PC-3 (cell line): ENCODE measurements at regions of chr10 and their contacts with region 1.

Region 1: GRCh38 chr10:5889624-5890451 is at the starts of genes ANKRD16 and FBH1:
- DNase-seq: peak; percentile 93
- ATAC-seq: peak; percentile 86
- H3K4me3 ChIP-seq: peak within 1 kb of the TSS; percentile 77
- H3K27ac ChIP-seq: no peak within 1 kb of the TSS
- H3K4me1 ChIP-seq: peaks cover 4% of the 10 kb centered on the region
- H3K27me3 ChIP-seq: no peaks in the 10 kb centered on the region
- CTCF ChIP-seq: no peak
- total RNA-seq, gene ANKRD16: 4.9 and 7.2 TPM in 2 replicates
- total RNA-seq, gene FBH1: 22.0 and 33.2 TPM in 2 replicates

Region 2: GRCh38 chr10:5684318-5684970 is 205.4 kb before region 1 on chr10 and contains the start of gene TASOR2:
- CTCF ChIA-PET with region 1: no interaction called
- POLR2A ChIA-PET with region 1: no interaction called
- intact Hi-C with region 1: loop called (anchors 10 kb)
- DNase-seq: peak; percentile 88
- ATAC-seq: peak; percentile 84
- H3K4me3 ChIP-seq: peak within 1 kb of the TSS; percentile 84
- H3K27ac ChIP-seq: peak within 1 kb of the TSS; percentile 73
- H3K4me1 ChIP-seq: peaks cover 12% of the 10 kb centered on the region; the same call in 1 of the 2 replicates
- H3K27me3 ChIP-seq: no peaks in the 10 kb centered on the region
- CTCF ChIP-seq: no peak
- total RNA-seq, gene TASOR2: 47.3 and 52.9 TPM in 2 replicates

Region 3: DNA sequence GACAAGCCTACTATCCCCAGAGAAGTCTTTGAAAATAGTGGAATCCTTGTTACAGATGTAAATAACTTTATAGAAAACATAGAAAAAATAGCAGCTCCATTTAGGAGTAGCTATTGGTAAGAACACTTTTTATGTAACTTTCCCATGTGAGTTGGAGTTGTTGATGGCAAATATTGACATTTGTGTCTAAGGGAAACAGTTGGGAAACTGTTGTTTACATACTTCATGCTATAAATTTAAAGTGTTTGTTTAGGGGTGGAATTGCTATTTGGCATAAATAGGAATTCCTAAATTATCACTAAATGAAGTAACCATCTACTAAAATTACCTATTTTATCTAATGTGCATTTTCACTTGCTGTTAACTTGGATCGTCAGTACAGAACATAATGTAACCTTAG is 127.3 kb before region 1 on chr10:
- CTCF ChIA-PET with region 1: no interaction called
- POLR2A ChIA-PET with region 1: interaction called, 22 read pairs
- intact Hi-C with region 1: no loop called
- DNase-seq: no peak
- ATAC-seq: peak; percentile 53
- H3K4me3 ChIP-seq: no peak overlapping the region
- H3K27ac ChIP-seq: no peak overlapping the region
- H3K4me1 ChIP-seq: no peaks in the 10 kb centered on the region
- H3K27me3 ChIP-seq: no peaks in the 10 kb centered on the region
- CTCF ChIP-seq: no peak

Region 4: GRCh38 chr10:5813287-5814109 is 76.3 kb before region 1 on chr10 and contains the start of gene GDI2:
- CTCF ChIA-PET with region 1: no interaction called
- POLR2A ChIA-PET with region 1: interaction called, 8 read pairs
- intact Hi-C with region 1: loop called (anchors 5 kb)
- DNase-seq: peak; percentile 89
- ATAC-seq: peak; percentile 93
- H3K4me3 ChIP-seq: peak within 1 kb of the TSS; percentile 96
- H3K27ac ChIP-seq: peak within 1 kb of the TSS; percentile 82
- H3K4me1 ChIP-seq: peaks cover 26% of the 10 kb centered on the region
- H3K27me3 ChIP-seq: no peaks in the 10 kb centered on the region
- CTCF ChIP-seq: no peak
- total RNA-seq, gene GDI2: 94.7 and 122 TPM in 2 replicates

Region 5: DNA sequence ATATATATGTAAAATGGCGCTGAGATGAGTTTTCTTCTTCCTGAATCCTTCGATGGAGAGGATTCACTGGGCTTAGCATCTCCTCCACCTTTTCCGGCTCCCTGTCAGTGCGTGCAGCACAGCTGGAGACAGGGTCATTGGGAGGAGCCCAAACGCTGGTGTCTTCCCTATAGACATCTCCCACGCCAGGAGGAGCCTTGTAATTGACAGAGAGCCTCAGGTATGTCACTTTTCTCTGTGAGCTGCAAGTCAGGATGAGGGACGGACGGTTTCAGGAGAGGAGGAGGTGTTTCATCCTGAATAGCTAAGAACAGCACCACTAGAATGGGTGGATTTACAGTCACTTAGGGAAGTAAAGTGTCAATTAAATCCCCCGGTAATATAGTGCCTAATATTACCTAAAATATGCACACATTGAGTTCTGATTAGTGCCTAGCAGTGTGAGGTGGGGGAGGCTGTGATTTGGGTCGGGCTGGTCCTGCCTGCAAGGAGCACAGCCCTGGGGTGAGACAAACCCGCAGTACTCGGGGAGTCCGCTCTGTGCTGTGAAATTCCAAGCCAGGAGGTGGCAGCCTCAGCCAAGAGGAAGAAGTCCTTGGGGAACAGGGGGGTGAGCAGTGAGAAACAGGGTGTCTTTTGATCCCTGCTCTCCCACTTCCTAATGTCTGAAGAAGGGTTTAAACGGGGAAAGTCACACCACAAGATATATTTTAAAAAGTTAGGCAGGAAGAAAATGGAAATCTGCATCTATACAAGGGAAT is 59.3 kb after region 1 on chr10:
- CTCF ChIA-PET with region 1: interaction called, 16 read pairs
- POLR2A ChIA-PET with region 1: interaction called, 3 read pairs
- intact Hi-C with region 1: no loop called
- DNase-seq: peak; percentile 54
- ATAC-seq: peak; percentile 42
- H3K4me3 ChIP-seq: no peak overlapping the region
- H3K27ac ChIP-seq: no peak overlapping the region
- H3K4me1 ChIP-seq: peaks cover 30% of the 10 kb centered on the region
- H3K27me3 ChIP-seq: no peaks in the 10 kb centered on the region
- CTCF ChIP-seq: peak; percentile 61